SK-N-SH (cell line): ENCODE measurements at regions of chr17 and their contacts with region 1.

Region 1: GRCh38 chr17:8383143-8383822 is at the start of gene RPL26:
- DNase-seq: peak; percentile 94
- H3K4me3 ChIP-seq: peak within 1 kb of the TSS; percentile 73 to 87
- H3K27ac ChIP-seq: peak within 1 kb of the TSS; percentile 77 to 90
- H3K4me1 ChIP-seq: peaks cover 21 to 28% of the 10 kb centered on the region in 2 experiments; a peak in 3 of 4 replicates
- H3K27me3 ChIP-seq: no peaks in the 10 kb centered on the region
- CTCF ChIP-seq: peak; percentile 98
- EP300 ChIP-seq: peak in 1 of 2 experiments; percentile 8; a peak in 1 of 4 replicates
- RAD21 ChIP-seq: peak; percentile 40; the same call in 1 of the 2 replicates
- polyA plus RNA-seq, gene RPL26: 4,770 and 5,684 TPM in 2 replicates

Region 2: GRCh38 chr17:7767405-7768021 is 615.8 kb before region 1 on chr17:
- CTCF ChIA-PET with region 1: no interaction called
- POLR2A ChIA-PET with region 1: no interaction called
- DNase-seq: no peak
- H3K4me3 ChIP-seq: no peak overlapping the region
- H3K27ac ChIP-seq: no peak overlapping the region
- H3K4me1 ChIP-seq: no peaks in the 10 kb centered on the region
- H3K27me3 ChIP-seq: no peaks in the 10 kb centered on the region; the same call in 1 of the 2 replicates
- CTCF ChIP-seq: no peak
- EP300 ChIP-seq: no peak
- RAD21 ChIP-seq: no peak

Region 3: DNA sequence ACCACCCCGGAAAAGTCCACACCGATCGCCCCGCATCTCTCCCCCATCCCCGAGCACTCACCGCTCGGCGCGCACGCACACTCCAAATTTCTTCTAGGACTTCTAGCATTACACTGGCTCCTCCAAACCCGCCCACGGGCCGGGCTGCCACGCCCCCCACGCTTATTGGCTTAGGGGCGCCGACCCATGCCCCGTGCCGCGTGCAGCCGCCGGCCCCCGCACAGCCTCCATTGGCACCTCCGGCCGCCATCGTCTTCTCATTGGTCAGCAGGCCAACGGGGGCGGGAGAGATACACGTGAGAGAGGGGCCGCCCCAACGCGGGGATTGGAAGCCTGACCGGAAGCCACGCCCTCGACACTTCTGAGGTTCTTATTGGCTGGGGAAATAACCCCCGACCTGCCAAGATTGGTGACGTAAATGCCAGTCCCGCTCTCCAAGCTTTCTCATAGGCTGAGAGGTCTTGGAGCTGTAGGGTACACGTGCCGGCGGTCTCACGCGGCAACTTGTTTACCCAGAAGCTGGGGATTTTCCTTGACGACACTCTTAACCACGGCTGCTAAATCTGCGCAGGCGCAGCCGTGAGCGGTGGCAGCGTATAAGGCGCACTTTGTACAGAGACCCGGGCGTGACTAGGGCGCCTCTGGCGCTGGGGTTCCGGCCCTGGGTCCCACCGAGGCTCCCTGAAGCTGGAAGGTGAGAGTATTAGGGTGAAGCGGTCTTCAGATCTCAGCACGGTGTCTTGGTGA is 226.9 kb before region 1 on chr17:
- CTCF ChIA-PET with region 1: no interaction called
- POLR2A ChIA-PET with region 1: no interaction called
- DNase-seq: peak; percentile 92
- H3K4me3 ChIP-seq: peak overlapping the region; percentile 54 to 78
- H3K27ac ChIP-seq: peak overlapping the region; percentile 91 to 95
- H3K4me1 ChIP-seq: peaks cover 36 to 47% of the 10 kb centered on the region in 2 experiments; a peak in 3 of 4 replicates
- H3K27me3 ChIP-seq: no peaks in the 10 kb centered on the region
- CTCF ChIP-seq: no peak; the same call in 1 of the 2 replicates
- EP300 ChIP-seq: no peak
- RAD21 ChIP-seq: 0 out of 2 replicates have a peak, but pooled peaks have one; percentile 30

Region 4: DNA sequence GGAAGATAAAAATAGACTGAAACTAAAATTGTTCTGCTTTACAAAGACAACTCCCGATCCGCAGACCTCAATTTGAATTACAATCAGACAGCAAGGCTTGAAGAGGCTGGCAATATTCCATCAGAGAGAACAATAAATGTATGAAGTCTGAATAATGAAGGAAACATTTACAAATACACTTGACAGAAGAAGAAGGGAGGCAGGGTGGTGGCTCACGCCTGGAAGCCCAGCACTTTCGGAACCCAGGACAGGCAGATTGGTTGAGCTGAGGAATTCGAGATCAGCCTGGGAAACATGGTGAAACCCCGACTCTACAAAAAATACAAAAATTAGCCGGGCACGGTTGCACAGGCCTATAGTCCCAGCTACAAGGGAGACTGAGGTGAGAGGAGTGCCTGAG is 29.0 kb before region 1 on chr17:
- CTCF ChIA-PET with region 1: no interaction called
- POLR2A ChIA-PET with region 1: no interaction called
- DNase-seq: no peak
- H3K4me3 ChIP-seq: no peak overlapping the region
- H3K27ac ChIP-seq: no peak overlapping the region
- H3K4me1 ChIP-seq: no peaks in the 10 kb centered on the region
- H3K27me3 ChIP-seq: no peaks in the 10 kb centered on the region
- CTCF ChIP-seq: no peak
- EP300 ChIP-seq: no peak
- RAD21 ChIP-seq: no peak

Region 5: GRCh38 chr17:8393420-8394241 is 10.3 kb after region 1 on chr17:
- CTCF ChIA-PET with region 1: interaction called, 16 read pairs
- POLR2A ChIA-PET with region 1: interaction called, 3 read pairs
- DNase-seq: no peak
- H3K4me3 ChIP-seq: no peak overlapping the region
- H3K27ac ChIP-seq: no peak overlapping the region
- H3K4me1 ChIP-seq: no peaks in the 10 kb centered on the region; a peak in 1 of 4 replicates
- H3K27me3 ChIP-seq: peaks cover 22% of the 10 kb centered on the region; the same call in 1 of the 2 replicates
- CTCF ChIP-seq: no peak
- EP300 ChIP-seq: no peak
- RAD21 ChIP-seq: no peak

Region 6: GRCh38 chr17:8409966-8410864 is 26.9 kb after region 1 on chr17:
- CTCF ChIA-PET with region 1: interaction called, 13 read pairs
- POLR2A ChIA-PET with region 1: no interaction called
- DNase-seq: peak; percentile 80
- H3K4me3 ChIP-seq: peak overlapping the region in 1 of 2 experiments; percentile 48; a peak in 1 of 4 replicates
- H3K27ac ChIP-seq: no peak overlapping the region
- H3K4me1 ChIP-seq: no peaks in the 10 kb centered on the region
- H3K27me3 ChIP-seq: peaks cover 17% of the 10 kb centered on the region; the same call in 1 of the 2 replicates
- CTCF ChIP-seq: peak; percentile 84
- EP300 ChIP-seq: no peak
- RAD21 ChIP-seq: peak; percentile 85

Region 7: DNA sequence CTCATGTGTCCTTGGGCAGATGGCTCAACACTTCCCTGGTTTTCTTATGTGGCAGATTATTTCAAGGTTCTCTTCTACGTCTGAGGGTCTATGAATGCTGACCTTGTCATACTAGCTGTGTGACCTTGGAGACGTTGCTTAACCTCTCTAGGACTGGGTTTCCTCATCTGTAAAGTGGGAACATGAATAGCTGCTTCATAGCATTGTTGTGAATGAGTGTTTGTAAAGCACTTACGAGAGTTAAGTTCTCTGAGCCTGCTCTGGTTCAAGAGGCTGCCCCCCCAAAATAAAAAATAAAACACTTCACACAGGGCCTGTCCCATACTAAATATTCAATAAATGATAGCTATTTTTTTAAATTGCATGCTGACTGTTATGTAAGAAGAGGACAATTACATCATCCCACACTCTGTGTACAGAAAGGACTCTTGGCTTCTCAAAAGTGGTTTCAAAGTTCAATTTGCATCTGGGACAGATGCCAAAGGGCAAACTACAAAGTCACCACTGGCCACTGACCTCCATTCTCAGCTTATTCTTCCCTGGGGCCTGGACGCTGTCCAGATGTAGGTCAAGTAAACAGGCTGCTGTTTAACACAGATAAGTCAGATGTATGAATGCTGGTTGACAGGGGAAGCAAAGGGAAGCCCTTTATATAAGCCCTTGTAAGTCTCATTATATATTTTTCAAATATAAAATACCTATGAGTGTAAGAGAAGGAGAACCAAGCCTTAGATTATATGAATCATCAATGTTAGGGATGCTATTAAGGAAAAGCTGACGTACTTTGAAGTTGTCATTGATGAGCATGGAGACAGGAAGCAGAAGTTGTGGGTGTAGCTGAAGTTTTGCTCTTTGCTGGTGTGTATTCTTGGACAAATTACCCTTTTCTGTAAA is 37.0 kb after region 1 on chr17:
- CTCF ChIA-PET with region 1: interaction called, 14 read pairs
- POLR2A ChIA-PET with region 1: interaction called, 3 read pairs
- DNase-seq: peak; percentile 72
- H3K4me3 ChIP-seq: no peak overlapping the region
- H3K27ac ChIP-seq: peak overlapping the region in 1 of 2 experiments; percentile 18; a peak in 1 of 4 replicates
- H3K4me1 ChIP-seq: peaks cover 0 to 3% of the 10 kb centered on the region in 2 experiments; a peak in 1 of 4 replicates
- H3K27me3 ChIP-seq: peaks cover 14% of the 10 kb centered on the region; the same call in 1 of the 2 replicates
- CTCF ChIP-seq: no peak
- EP300 ChIP-seq: peak in 1 of 2 experiments; percentile 22; a peak in 1 of 4 replicates
- RAD21 ChIP-seq: no peak

Region 8: DNA sequence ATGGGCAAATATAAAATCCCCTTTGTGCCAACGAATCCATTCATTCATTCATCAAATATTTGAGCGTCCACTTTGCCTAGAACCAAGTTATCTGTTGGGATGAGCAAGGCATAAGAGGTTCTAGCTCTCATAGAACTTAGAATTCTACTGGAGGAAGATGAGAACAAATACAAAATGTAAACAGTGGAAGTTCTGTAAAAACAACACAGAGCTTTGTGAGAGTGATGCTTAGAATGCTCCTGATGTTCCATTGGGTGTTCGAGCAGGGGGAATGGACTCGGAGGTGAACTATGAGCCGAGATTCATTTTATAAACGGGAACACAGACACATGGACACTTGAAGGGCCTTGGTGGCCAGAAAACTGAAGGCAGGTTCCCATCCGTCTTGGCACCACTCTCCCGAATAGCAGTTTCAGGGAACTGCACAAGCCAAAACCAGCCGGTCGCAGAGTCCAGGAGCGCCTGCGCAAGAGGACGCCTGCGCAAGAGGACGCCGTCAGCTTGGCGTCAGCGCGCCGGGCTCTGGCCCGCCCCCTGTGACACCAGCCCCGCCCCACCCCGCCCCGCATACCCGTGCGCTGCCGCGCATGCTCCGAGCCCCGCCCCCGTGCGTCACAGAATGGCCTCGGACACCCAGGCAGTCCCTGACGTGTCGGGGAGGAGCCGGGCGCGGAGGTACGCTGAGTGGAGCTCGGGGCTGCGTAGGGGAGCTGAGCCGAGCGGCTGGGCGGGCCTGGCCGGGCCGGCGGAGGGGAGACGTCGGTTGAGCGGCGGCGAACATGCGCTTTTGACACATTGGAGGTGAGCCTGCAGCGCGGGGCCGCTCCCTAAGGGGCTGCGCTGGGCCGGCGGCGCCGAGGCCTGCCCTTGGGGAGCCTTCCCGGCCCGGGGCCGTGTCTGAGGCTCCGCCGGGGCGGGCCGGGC is 52.2 kb after region 1 on chr17 and contains the start of gene NDEL1:
- CTCF ChIA-PET with region 1: interaction called, 11 read pairs
- POLR2A ChIA-PET with region 1: no interaction called
- DNase-seq: peak; percentile 100
- H3K4me3 ChIP-seq: peak within 1 kb of the TSS; percentile 87 to 90
- H3K27ac ChIP-seq: peak within 1 kb of the TSS; percentile 91 to 96
- H3K4me1 ChIP-seq: peaks cover 0 to 6% of the 10 kb centered on the region in 2 experiments; a peak in 2 of 4 replicates
- H3K27me3 ChIP-seq: no peaks in the 10 kb centered on the region
- CTCF ChIP-seq: no peak
- EP300 ChIP-seq: no peak
- RAD21 ChIP-seq: no peak
- polyA plus RNA-seq, gene NDEL1: 49.5 and 58.6 TPM in 2 replicates

Region 9: DNA sequence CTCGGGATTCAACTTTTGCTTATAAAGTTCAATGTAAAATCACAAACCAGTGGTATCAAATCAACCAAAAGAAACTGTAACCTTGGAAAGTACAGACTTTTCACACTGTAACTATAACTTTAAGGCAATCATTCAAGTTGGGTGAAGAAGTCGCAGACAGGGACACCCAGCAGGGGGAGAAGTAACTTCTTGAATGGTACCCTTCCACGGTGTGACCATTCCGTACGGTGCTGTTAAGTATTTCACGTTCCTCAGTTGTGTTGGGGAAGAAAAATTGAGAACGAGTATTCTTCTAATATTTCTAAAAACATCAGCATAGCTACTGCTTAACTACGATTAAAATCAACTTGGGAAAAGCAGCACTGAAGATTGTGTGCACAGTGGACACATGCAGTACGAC is 191.4 kb after region 1 on chr17:
- CTCF ChIA-PET with region 1: no interaction called
- POLR2A ChIA-PET with region 1: no interaction called
- DNase-seq: no peak
- H3K4me3 ChIP-seq: no peak overlapping the region
- H3K27ac ChIP-seq: no peak overlapping the region
- H3K4me1 ChIP-seq: peaks cover 0 to 6% of the 10 kb centered on the region in 2 experiments; a peak in 1 of 4 replicates
- H3K27me3 ChIP-seq: no peaks in the 10 kb centered on the region
- CTCF ChIP-seq: peak; percentile 24
- EP300 ChIP-seq: no peak
- RAD21 ChIP-seq: no peak